Sigmoid colon (tissue), 7 donors: ENCODE measurements at regions of chr18 and their contacts with region 1.

Region 1: GRCh38 chr18:79246348-79247108 is 149.2 kb upstream of the NFATC1 start:
- DNase-seq: peak; percentile 72
- H3K4me3 ChIP-seq: no peak overlapping the region
- H3K27ac ChIP-seq: no peak overlapping the region
- H3K4me1 ChIP-seq: peaks cover 0 to 19% (median 0%) of the 10 kb centered on the region in 4 donors
- H3K27me3 ChIP-seq: no peaks in the 10 kb centered on the region
- CTCF ChIP-seq: peak; percentile 72 to 91 (median 78)
- EP300 ChIP-seq: no peak
- POLR2A ChIP-seq: no peak

Region 2: GRCh38 chr18:77899972-77900754 is 1346.4 kb before region 1 on chr18:
- intact Hi-C with region 1: loop called (anchors 5 kb)
- DNase-seq: no peak
- H3K4me3 ChIP-seq: peak overlapping the region in 3 of 4 donors; percentile 11 to 32 (median 30)
- H3K27ac ChIP-seq: no peak overlapping the region
- H3K4me1 ChIP-seq: peaks cover 0 to 9% (median 8%) of the 10 kb centered on the region in 4 donors
- H3K27me3 ChIP-seq: peaks cover 0 to 26% (median 0%) of the 10 kb centered on the region in 3 donors
- CTCF ChIP-seq: peak; percentile 28 to 72 (median 52)
- EP300 ChIP-seq: no peak
- POLR2A ChIP-seq: no peak

Region 3: GRCh38 chr18:78875268-78875997 is 371.1 kb before region 1 on chr18:
- intact Hi-C with region 1: loop called (anchors 10 kb)
- DNase-seq: no peak
- H3K4me3 ChIP-seq: no peak overlapping the region
- H3K27ac ChIP-seq: no peak overlapping the region
- H3K4me1 ChIP-seq: no peaks in the 10 kb centered on the region
- H3K27me3 ChIP-seq: peaks cover 0 to 6% (median 0%) of the 10 kb centered on the region in 3 donors
- CTCF ChIP-seq: no peak
- EP300 ChIP-seq: no peak
- POLR2A ChIP-seq: no peak

Region 4: GRCh38 chr18:79664675-79665081 is 418.1 kb after region 1 on chr18:
- intact Hi-C with region 1: no loop called
- DNase-seq: no peak
- H3K4me3 ChIP-seq: no peak overlapping the region
- H3K27ac ChIP-seq: no peak overlapping the region
- H3K4me1 ChIP-seq: no peaks in the 10 kb centered on the region
- H3K27me3 ChIP-seq: peaks cover 0 to 3% (median 0%) of the 10 kb centered on the region in 3 donors
- CTCF ChIP-seq: no peak
- EP300 ChIP-seq: no peak
- POLR2A ChIP-seq: no peak